ENCODE measurements at regions of chr2 and their contacts with region 1.

Region 1: GRCh38 chr2:233854241-233854981 is at the start of gene HJURP:
- DNase-seq: peak; percentile 85 to 95 (median 92)
- H3K4me3 ChIP-seq: peak within 1 kb of the TSS; percentile 55 to 98 (median 76)
- H3K27ac ChIP-seq: peak within 1 kb of the TSS in 14 of 59 donors; percentile 18 to 79 (median 49)
- H3K27me3 ChIP-seq: peaks cover 0 to 43% (median 6%) of the 10 kb centered on the region in 45 donors
- CTCF ChIP-seq: peak in 18 of 56 donors; percentile 6 to 48 (median 15)
- total RNA-seq, gene HJURP: 0.18 to 1.9 (median 0.66) TPM in 23 of 120 experiments, not detected in the others

Region 2: GRCh38 chr2:232903989-232904388 is 950.4 kb before region 1 on chr2:
- intact Hi-C with region 1: no loop called
- DNase-seq: no peak
- H3K4me3 ChIP-seq: no peak overlapping the region
- H3K27ac ChIP-seq: peak overlapping the region in 13 of 59 donors; percentile 2 to 46 (median 29)
- H3K27me3 ChIP-seq: no peaks in the 10 kb centered on the region
- CTCF ChIP-seq: no peak

Region 3: GRCh38 chr2:233303252-233303651 is 551.2 kb before region 1 on chr2:
- intact Hi-C with region 1: no loop called
- DNase-seq: peak in 1 of 10 donors; percentile 21
- H3K4me3 ChIP-seq: no peak overlapping the region
- H3K27ac ChIP-seq: no peak overlapping the region
- H3K27me3 ChIP-seq: no peaks in the 10 kb centered on the region
- CTCF ChIP-seq: no peak

Region 4: GRCh38 chr2:234158812-234159211 is 304.4 kb after region 1 on chr2:
- intact Hi-C with region 1: no loop called
- DNase-seq: no peak
- H3K4me3 ChIP-seq: no peak overlapping the region
- H3K27ac ChIP-seq: no peak overlapping the region
- H3K27me3 ChIP-seq: peaks cover 0 to 3% (median 0%) of the 10 kb centered on the region in 45 donors
- CTCF ChIP-seq: no peak

Region 5: GRCh38 chr2:234544659-234545611 is 690.5 kb after region 1 on chr2:
- intact Hi-C with region 1: loop called in 1 of 2 experiments (anchors 10 kb)
- DNase-seq: peak; percentile 50 to 78 (median 64)
- H3K4me3 ChIP-seq: peak overlapping the region in 4 of 59 donors; percentile 2 to 33 (median 12)
- H3K27ac ChIP-seq: no peak overlapping the region
- H3K27me3 ChIP-seq: peaks cover 0 to 12% (median 0%) of the 10 kb centered on the region in 45 donors
- CTCF ChIP-seq: peak; percentile 73 to 98 (median 94)

Measured in dorsolateral prefrontal cortex (tissue), 120 donors.